ENCODE measurements at regions of chr5 and their contacts with region 1.

Region 1: GRCh38 chr5:114185274-114185673 is 176.6 kb upstream of the KCNN2 start:
- DNase-seq: peak in 2 of 5 donors; percentile 10 to 51
- H3K4me3 ChIP-seq: no peak overlapping the region
- H3K27ac ChIP-seq: no peak overlapping the region
- H3K4me1 ChIP-seq: no peaks in the 10 kb centered on the region
- H3K27me3 ChIP-seq: no peaks in the 10 kb centered on the region
- CTCF ChIP-seq: no peak
- EP300 ChIP-seq: no peak
- POLR2A ChIP-seq: no peak

Region 2: GRCh38 chr5:114201332-114201731 is 16.1 kb after region 1 on chr5:
- intact Hi-C with region 1: loop called in 1 of 4 experiments (anchors 2 kb)
- DNase-seq: no peak
- H3K4me3 ChIP-seq: no peak overlapping the region
- H3K27ac ChIP-seq: no peak overlapping the region
- H3K4me1 ChIP-seq: no peaks in the 10 kb centered on the region
- H3K27me3 ChIP-seq: peaks cover 2% of the 10 kb centered on the region
- CTCF ChIP-seq: no peak
- EP300 ChIP-seq: no peak
- POLR2A ChIP-seq: no peak

Measured in ovary (tissue), 10 donors.